ENCODE measurements at regions of chr19 and their contacts with region 1.

Region 1: DNA sequence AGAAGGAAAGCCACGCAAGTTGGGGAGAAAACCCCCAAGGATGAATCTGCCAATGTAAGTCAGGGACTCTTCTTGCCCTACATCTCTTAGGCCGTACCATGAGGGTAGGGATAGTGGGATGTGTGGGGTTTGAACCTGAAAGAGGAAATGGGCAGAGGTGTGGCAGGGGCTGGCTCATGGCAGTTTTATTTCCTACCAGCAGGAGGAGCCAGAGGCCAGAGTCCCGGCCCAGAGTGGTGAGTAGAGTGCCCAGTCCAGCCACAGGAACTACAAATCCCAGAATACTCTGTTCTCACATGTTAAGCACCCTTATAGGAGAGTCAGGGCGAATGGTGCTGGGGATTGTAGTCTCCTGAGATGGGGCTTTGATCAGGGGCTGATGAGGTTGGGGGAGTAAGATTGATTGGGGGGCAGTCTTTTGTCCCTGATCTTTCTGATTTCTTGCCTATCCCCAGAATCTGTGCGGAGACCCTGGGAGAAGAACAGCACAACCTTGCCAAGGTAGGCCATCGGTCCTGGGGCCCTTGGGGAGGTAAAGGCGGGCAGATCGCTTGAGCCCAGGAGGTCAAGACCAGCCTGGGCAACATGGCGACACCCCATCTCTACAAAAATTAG is 16.5 kb downstream of the VASP start:
- DNase-seq: peak; percentile 88 to 93 (median 91)
- H3K4me3 ChIP-seq: peak overlapping the region in 1 of 3 experiments; percentile 45
- H3K4me3 Mint-ChIP-seq: peak overlapping the region in 1 of 2 donors; percentile 30
- H3K27ac ChIP-seq: peak overlapping the region; percentile 67 to 91
- H3K27ac Mint-ChIP-seq: peak overlapping the region; percentile 92 to 98 (median 94)
- H3K4me1 ChIP-seq: peaks cover 78 to 84% of the 10 kb centered on the region in 2 donors
- H3K4me1 Mint-ChIP-seq: peaks cover 67% of the 10 kb centered on the region
- H3K27me3 ChIP-seq: peaks cover 0 to 8% of the 10 kb centered on the region in 2 donors
- H3K27me3 Mint-ChIP-seq: peaks cover 16 to 19% (median 16%) of the 10 kb centered on the region in 3 donors
- CTCF ChIP-seq: peak; percentile 88

Region 2: DNA sequence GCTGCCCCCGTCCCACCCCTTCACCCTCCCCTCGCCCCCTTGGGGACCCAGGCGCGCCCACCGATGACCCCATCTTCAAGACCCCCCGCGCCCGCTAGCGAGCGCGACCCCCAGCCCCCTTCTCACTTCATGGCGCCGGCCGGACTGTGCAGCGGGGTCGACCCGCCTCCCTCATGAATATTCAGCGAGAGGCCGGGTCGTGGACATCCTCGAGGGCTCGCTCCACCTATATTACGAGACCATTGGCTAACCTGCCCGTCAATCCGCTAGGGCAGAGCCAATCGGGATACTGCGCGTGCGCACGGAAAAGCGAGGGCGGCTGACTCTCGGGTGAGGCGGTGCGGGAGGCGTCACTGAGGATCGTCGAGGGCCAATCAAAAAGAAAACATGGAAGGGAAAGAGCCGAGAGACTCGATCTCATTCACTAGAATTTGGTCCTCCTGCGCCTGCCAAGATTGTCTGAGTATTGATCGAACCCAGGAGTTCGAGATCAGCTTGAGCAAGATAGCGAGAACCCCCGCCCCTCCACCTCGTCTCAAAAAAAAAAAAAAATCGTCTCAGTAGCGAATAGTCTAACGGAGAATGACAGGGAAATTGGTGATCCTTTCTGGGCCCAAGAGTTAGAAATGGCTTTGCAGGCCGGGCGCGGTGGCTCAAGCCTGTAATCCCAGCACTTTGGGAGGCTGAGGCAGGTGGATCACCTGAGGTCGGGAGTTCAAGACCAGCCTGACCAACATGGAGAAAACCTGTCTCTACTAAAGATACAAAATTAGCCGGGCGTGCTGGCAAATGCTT is 153.1 kb before region 1 on chr19 and contains the start of gene ERCC2:
- intact Hi-C with region 1: no loop called
- DNase-seq: peak; percentile 97 to 99 (median 98)
- H3K4me3 ChIP-seq: peak within 1 kb of the TSS; percentile 61 to 88 (median 83)
- H3K4me3 Mint-ChIP-seq: peak within 1 kb of the TSS; percentile 89 to 96
- H3K27ac ChIP-seq: peak within 1 kb of the TSS; percentile 72 to 88
- H3K27ac Mint-ChIP-seq: peak within 1 kb of the TSS; percentile 91 to 98 (median 96)
- H3K4me1 ChIP-seq: peaks cover 7 to 11% of the 10 kb centered on the region in 2 donors
- H3K4me1 Mint-ChIP-seq: peaks cover 13% of the 10 kb centered on the region
- H3K27me3 ChIP-seq: no peaks in the 10 kb centered on the region
- H3K27me3 Mint-ChIP-seq: peaks cover 0 to 6% (median 4%) of the 10 kb centered on the region in 3 donors
- CTCF ChIP-seq: no peak
- polyA plus RNA-seq, gene ERCC2: 4.0 to 20.0 (median 4.4) TPM

Region 3: GRCh38 chr19:45496349-45496953 is 27.3 kb before region 1 on chr19:
- intact Hi-C with region 1: loop called in 1 of 2 experiments (anchors 5 kb)
- DNase-seq: peak in 1 of 3 donors; percentile 25
- H3K4me3 ChIP-seq: peak overlapping the region; percentile 44 to 79 (median 47)
- H3K4me3 Mint-ChIP-seq: peak overlapping the region; percentile 71 to 76
- H3K27ac ChIP-seq: no peak overlapping the region
- H3K27ac Mint-ChIP-seq: no peak overlapping the region
- H3K4me1 ChIP-seq: peaks cover 56 to 70% of the 10 kb centered on the region in 2 donors
- H3K4me1 Mint-ChIP-seq: peaks cover 53% of the 10 kb centered on the region
- H3K27me3 ChIP-seq: peaks cover 15 to 46% of the 10 kb centered on the region in 2 donors
- H3K27me3 Mint-ChIP-seq: peaks cover 40 to 78% (median 59%) of the 10 kb centered on the region in 3 donors
- CTCF ChIP-seq: no peak

Region 4: GRCh38 chr19:45506991-45507871 is 16.5 kb before region 1 on chr19 and contains the start of gene VASP:
- intact Hi-C with region 1: no loop called
- DNase-seq: peak; percentile 86 to 90 (median 87)
- H3K4me3 ChIP-seq: peak within 1 kb of the TSS; percentile 80 to 100 (median 91)
- H3K4me3 Mint-ChIP-seq: peak within 1 kb of the TSS; percentile 98 to 99
- H3K27ac ChIP-seq: peak within 1 kb of the TSS; percentile 96 to 99
- H3K27ac Mint-ChIP-seq: peak within 1 kb of the TSS; percentile 96 to 99 (median 97)
- H3K4me1 ChIP-seq: peaks cover 60 to 76% of the 10 kb centered on the region in 2 donors
- H3K4me1 Mint-ChIP-seq: peaks cover 61% of the 10 kb centered on the region
- H3K27me3 ChIP-seq: no peaks in the 10 kb centered on the region
- H3K27me3 Mint-ChIP-seq: peaks cover 0 to 4% (median 0%) of the 10 kb centered on the region in 3 donors
- CTCF ChIP-seq: no peak
- polyA plus RNA-seq, gene VASP: 132 to 154 (median 144) TPM

Region 5: GRCh38 chr19:45558399-45558878 is 34.7 kb after region 1 on chr19:
- intact Hi-C with region 1: loop called in 1 of 2 experiments (anchors 5 kb)
- DNase-seq: peak; percentile 47 to 68 (median 65)
- H3K4me3 ChIP-seq: no peak overlapping the region
- H3K4me3 Mint-ChIP-seq: no peak overlapping the region
- H3K27ac ChIP-seq: no peak overlapping the region
- H3K27ac Mint-ChIP-seq: no peak overlapping the region
- H3K4me1 ChIP-seq: no peaks in the 10 kb centered on the region
- H3K4me1 Mint-ChIP-seq: peaks cover 10% of the 10 kb centered on the region
- H3K27me3 ChIP-seq: no peaks in the 10 kb centered on the region
- H3K27me3 Mint-ChIP-seq: no peaks in the 10 kb centered on the region
- CTCF ChIP-seq: peak; percentile 83

Region 6: GRCh38 chr19:45584332-45585157 is 60.8 kb after region 1 on chr19 and contains the start of gene OPA3:
- intact Hi-C with region 1: loop called in 1 of 2 experiments (anchors 10 kb)
- DNase-seq: peak; percentile 99 to 100 (median 100)
- H3K4me3 ChIP-seq: peak within 1 kb of the TSS; percentile 87 to 92 (median 89)
- H3K4me3 Mint-ChIP-seq: peak within 1 kb of the TSS; percentile 93 to 94
- H3K27ac ChIP-seq: peak within 1 kb of the TSS; percentile 95 to 98
- H3K27ac Mint-ChIP-seq: peak within 1 kb of the TSS; percentile 97 to 99 (median 98)
- H3K4me1 ChIP-seq: peaks cover 12 to 16% of the 10 kb centered on the region in 2 donors
- H3K4me1 Mint-ChIP-seq: peaks cover 8% of the 10 kb centered on the region
- H3K27me3 ChIP-seq: no peaks in the 10 kb centered on the region
- H3K27me3 Mint-ChIP-seq: peaks cover 2 to 12% (median 10%) of the 10 kb centered on the region in 3 donors
- CTCF ChIP-seq: no peak
- polyA plus RNA-seq, gene OPA3: 4.4 to 6.9 (median 5.6) TPM

Region 7: GRCh38 chr19:45595814-45596213 is 72.1 kb after region 1 on chr19:
- intact Hi-C with region 1: no loop called
- DNase-seq: no peak
- H3K4me3 ChIP-seq: no peak overlapping the region
- H3K4me3 Mint-ChIP-seq: peak overlapping the region in 1 of 2 donors; percentile 82
- H3K27ac ChIP-seq: no peak overlapping the region
- H3K27ac Mint-ChIP-seq: no peak overlapping the region
- H3K4me1 ChIP-seq: peaks cover 33 to 39% of the 10 kb centered on the region in 2 donors
- H3K4me1 Mint-ChIP-seq: peaks cover 43% of the 10 kb centered on the region
- H3K27me3 ChIP-seq: peaks cover 18 to 50% of the 10 kb centered on the region in 2 donors
- H3K27me3 Mint-ChIP-seq: peaks cover 69 to 71% (median 70%) of the 10 kb centered on the region in 3 donors
- CTCF ChIP-seq: no peak

Region 8: GRCh38 chr19:45681391-45682015 is 157.8 kb after region 1 on chr19:
- intact Hi-C with region 1: loop called (anchors 2 to 5 kb)
- DNase-seq: peak; percentile 77 to 83 (median 82)
- H3K4me3 ChIP-seq: peak overlapping the region in 2 of 3 experiments; percentile 16 to 62
- H3K4me3 Mint-ChIP-seq: peak overlapping the region; percentile 76 to 93
- H3K27ac ChIP-seq: no peak overlapping the region
- H3K27ac Mint-ChIP-seq: peak overlapping the region in 3 of 7 donors; percentile 50 to 87 (median 59)
- H3K4me1 ChIP-seq: peaks cover 26 to 27% of the 10 kb centered on the region in 2 donors
- H3K4me1 Mint-ChIP-seq: peaks cover 27% of the 10 kb centered on the region
- H3K27me3 ChIP-seq: peaks cover 13 to 31% of the 10 kb centered on the region in 2 donors
- H3K27me3 Mint-ChIP-seq: peaks cover 39 to 46% (median 40%) of the 10 kb centered on the region in 3 donors
- CTCF ChIP-seq: peak; percentile 99